B cell (primary cell): ENCODE measurements at regions of chr10 and their contacts with region 1.

Region 1: GRCh38 chr10:33115738-33116719 is 158.0 kb upstream of the ITGB1 start:
- DNase-seq: no peak
- ATAC-seq: no peak
- H3K4me3 ChIP-seq: no peak overlapping the region
- H3K4me3 Mint-ChIP-seq: no peak overlapping the region
- H3K27ac ChIP-seq: peak overlapping the region; percentile 39 to 54
- H3K27ac Mint-ChIP-seq: peak overlapping the region; percentile 92
- H3K4me1 ChIP-seq: peaks cover 42 to 76% of the 10 kb centered on the region in 2 donors
- H3K4me1 Mint-ChIP-seq: peaks cover 78% of the 10 kb centered on the region
- H3K27me3 ChIP-seq: no peaks in the 10 kb centered on the region
- H3K27me3 Mint-ChIP-seq: no peaks in the 10 kb centered on the region
- CTCF ChIP-seq: no peak

Region 2: DNA sequence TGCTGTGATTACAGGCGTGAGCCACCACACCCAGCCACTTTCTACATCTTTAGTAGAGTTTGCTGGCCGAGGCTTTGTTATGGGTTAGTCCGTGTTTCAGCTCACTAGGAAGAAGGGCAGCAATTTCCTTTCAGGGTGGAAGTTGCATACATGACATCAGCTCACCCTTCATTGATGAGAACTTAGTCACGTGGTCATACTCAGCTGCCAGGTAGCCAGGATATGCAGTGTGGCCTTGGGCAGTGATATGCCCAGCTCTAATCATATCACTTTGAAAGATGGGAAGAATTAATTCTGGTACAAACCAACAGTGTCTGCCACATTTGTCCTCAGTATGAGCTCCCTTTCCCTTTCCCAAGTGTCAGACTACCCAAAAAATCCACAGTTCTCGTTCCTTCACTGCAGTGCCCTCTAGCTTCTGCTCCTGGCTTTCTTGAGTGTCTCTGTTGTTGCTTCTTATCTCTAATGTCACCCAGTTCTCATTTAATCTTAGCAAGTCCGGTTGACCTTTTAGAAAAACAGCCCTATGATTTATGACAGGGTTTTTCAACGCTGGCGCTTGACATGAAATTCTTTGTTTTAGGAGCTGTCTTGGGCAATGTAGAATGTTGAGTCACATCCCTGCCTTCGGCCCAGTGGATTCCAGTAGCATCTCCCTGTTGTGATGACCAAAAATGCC is 49.3 kb before region 1 on chr10:
- CTCF ChIA-PET with region 1: no interaction called
- POLR2A ChIA-PET with region 1: no interaction called
- intact Hi-C with region 1: no loop called
- DNase-seq: no peak
- ATAC-seq: no peak
- H3K4me3 ChIP-seq: no peak overlapping the region
- H3K4me3 Mint-ChIP-seq: no peak overlapping the region
- H3K27ac ChIP-seq: no peak overlapping the region
- H3K27ac Mint-ChIP-seq: no peak overlapping the region
- H3K4me1 ChIP-seq: no peaks in the 10 kb centered on the region
- H3K4me1 Mint-ChIP-seq: no peaks in the 10 kb centered on the region
- H3K27me3 ChIP-seq: no peaks in the 10 kb centered on the region
- H3K27me3 Mint-ChIP-seq: no peaks in the 10 kb centered on the region
- CTCF ChIP-seq: no peak

Region 3: GRCh38 chr10:33095867-33096815 is 19.9 kb before region 1 on chr10:
- CTCF ChIA-PET with region 1: interaction called, 17 read pairs
- POLR2A ChIA-PET with region 1: interaction called, 3 read pairs
- intact Hi-C with region 1: loop called (anchors 2 kb)
- DNase-seq: peak; percentile 57
- ATAC-seq: peak; percentile 56
- H3K4me3 ChIP-seq: peak overlapping the region in 2 of 5 experiments; percentile 21 to 30
- H3K4me3 Mint-ChIP-seq: peak overlapping the region; percentile 70
- H3K27ac ChIP-seq: peak overlapping the region; percentile 59 to 65
- H3K27ac Mint-ChIP-seq: peak overlapping the region; percentile 81
- H3K4me1 ChIP-seq: peaks cover 44 to 54% of the 10 kb centered on the region in 2 donors
- H3K4me1 Mint-ChIP-seq: peaks cover 65% of the 10 kb centered on the region
- H3K27me3 ChIP-seq: no peaks in the 10 kb centered on the region
- H3K27me3 Mint-ChIP-seq: no peaks in the 10 kb centered on the region
- CTCF ChIP-seq: no peak